CD4-positive, alpha-beta T cell (primary cell): ENCODE measurements at regions of chr15 and their contacts with region 1.

Region 1: GRCh38 chr15:90233376-90234095 is at the start of gene CIB1:
- DNase-seq: peak; percentile 17 to 98 (median 96)
- ATAC-seq: peak; percentile 69
- H3K4me3 ChIP-seq: peak within 1 kb of the TSS; percentile 89
- H3K4me3 Mint-ChIP-seq: peak within 1 kb of the TSS; percentile 93
- H3K27ac ChIP-seq: peak within 1 kb of the TSS; percentile 97 to 99
- H3K27ac Mint-ChIP-seq: peak within 1 kb of the TSS; percentile 99
- H3K4me1 ChIP-seq: peaks cover 60% of the 10 kb centered on the region
- H3K4me1 Mint-ChIP-seq: peaks cover 56% of the 10 kb centered on the region
- H3K27me3 ChIP-seq: no peaks in the 10 kb centered on the region
- H3K27me3 Mint-ChIP-seq: no peaks in the 10 kb centered on the region
- CTCF ChIP-seq: peak; percentile 34
- total RNA-seq, gene CIB1: 279 to 295 TPM

Region 2: GRCh38 chr15:89893696-89894455 is 339.7 kb before region 1 on chr15 and contains the start of gene AP3S2:
- CTCF ChIA-PET with region 1: no interaction called
- POLR2A ChIA-PET with region 1: interaction called, 6 read pairs
- intact Hi-C with region 1: loop called in 1 of 2 experiments (anchors 10 kb)
- DNase-seq: peak; percentile 81 to 94 (median 85)
- ATAC-seq: peak; percentile 90
- H3K4me3 ChIP-seq: peak within 1 kb of the TSS; percentile 86
- H3K4me3 Mint-ChIP-seq: peak within 1 kb of the TSS; percentile 96
- H3K27ac ChIP-seq: peak within 1 kb of the TSS; percentile 60 to 74
- H3K27ac Mint-ChIP-seq: peak within 1 kb of the TSS; percentile 95
- H3K4me1 ChIP-seq: peaks cover 29% of the 10 kb centered on the region
- H3K4me1 Mint-ChIP-seq: peaks cover 42% of the 10 kb centered on the region
- H3K27me3 ChIP-seq: no peaks in the 10 kb centered on the region
- H3K27me3 Mint-ChIP-seq: no peaks in the 10 kb centered on the region
- CTCF ChIP-seq: no peak
- total RNA-seq, gene AP3S2: 18.9 to 20.5 TPM

Region 3: GRCh38 chr15:90013503-90013937 is 220.0 kb before region 1 on chr15:
- CTCF ChIA-PET with region 1: no interaction called
- POLR2A ChIA-PET with region 1: no interaction called
- intact Hi-C with region 1: no loop called
- DNase-seq: peak in 3 of 14 experiments; percentile 73 to 87 (median 79)
- ATAC-seq: peak; percentile 88
- H3K4me3 ChIP-seq: peak overlapping the region; percentile 10
- H3K4me3 Mint-ChIP-seq: peak overlapping the region; percentile 68
- H3K27ac ChIP-seq: peak overlapping the region in 1 of 2 donors; percentile 14
- H3K27ac Mint-ChIP-seq: peak overlapping the region; percentile 61
- H3K4me1 ChIP-seq: peaks cover 55% of the 10 kb centered on the region
- H3K4me1 Mint-ChIP-seq: peaks cover 69% of the 10 kb centered on the region
- H3K27me3 ChIP-seq: no peaks in the 10 kb centered on the region
- H3K27me3 Mint-ChIP-seq: no peaks in the 10 kb centered on the region
- CTCF ChIP-seq: no peak

Region 4: GRCh38 chr15:90143166-90143655 is 90.3 kb before region 1 on chr15:
- CTCF ChIA-PET with region 1: interaction called, 4 read pairs
- POLR2A ChIA-PET with region 1: interaction called, 5 read pairs
- intact Hi-C with region 1: loop called in 1 of 2 experiments (anchors 5 kb)
- DNase-seq: peak; percentile 35 to 78 (median 60)
- ATAC-seq: peak; percentile 67
- H3K4me3 ChIP-seq: peak overlapping the region; percentile 5
- H3K4me3 Mint-ChIP-seq: peak overlapping the region; percentile 66
- H3K27ac ChIP-seq: no peak overlapping the region
- H3K27ac Mint-ChIP-seq: peak overlapping the region; percentile 78
- H3K4me1 ChIP-seq: peaks cover 28% of the 10 kb centered on the region
- H3K4me1 Mint-ChIP-seq: peaks cover 37% of the 10 kb centered on the region
- H3K27me3 ChIP-seq: no peaks in the 10 kb centered on the region
- H3K27me3 Mint-ChIP-seq: no peaks in the 10 kb centered on the region
- CTCF ChIP-seq: peak; percentile 78

Region 5: GRCh38 chr15:90201130-90201949 is 32.2 kb before region 1 on chr15 and contains the start of gene SEMA4B:
- CTCF ChIA-PET with region 1: no interaction called
- POLR2A ChIA-PET with region 1: interaction called, 97 read pairs
- intact Hi-C with region 1: loop called in 1 of 2 experiments (anchors 1 kb)
- DNase-seq: peak; percentile 44 to 88 (median 70)
- ATAC-seq: peak; percentile 94
- H3K4me3 ChIP-seq: peak within 1 kb of the TSS; percentile 78
- H3K4me3 Mint-ChIP-seq: peak within 1 kb of the TSS; percentile 88
- H3K27ac ChIP-seq: peak within 1 kb of the TSS; percentile 5 to 36
- H3K27ac Mint-ChIP-seq: peak within 1 kb of the TSS; percentile 74
- H3K4me1 ChIP-seq: peaks cover 28% of the 10 kb centered on the region
- H3K4me1 Mint-ChIP-seq: peaks cover 28% of the 10 kb centered on the region
- H3K27me3 ChIP-seq: no peaks in the 10 kb centered on the region
- H3K27me3 Mint-ChIP-seq: no peaks in the 10 kb centered on the region
- CTCF ChIP-seq: no peak
- total RNA-seq, gene SEMA4B: 8.0 to 9.5 TPM

Region 6: GRCh38 chr15:90249203-90249863 is 15.8 kb after region 1 on chr15 and contains the start of gene TTLL13:
- CTCF ChIA-PET with region 1: interaction called, 3 read pairs
- POLR2A ChIA-PET with region 1: interaction called, 20 read pairs
- intact Hi-C with region 1: no loop called
- DNase-seq: peak; percentile 33 to 87 (median 60)
- ATAC-seq: peak; percentile 70
- H3K4me3 ChIP-seq: peak within 1 kb of the TSS; percentile 61
- H3K4me3 Mint-ChIP-seq: peak within 1 kb of the TSS; percentile 76
- H3K27ac ChIP-seq: no peak within 1 kb of the TSS
- H3K27ac Mint-ChIP-seq: peak within 1 kb of the TSS; percentile 63
- H3K4me1 ChIP-seq: peaks cover 19% of the 10 kb centered on the region
- H3K4me1 Mint-ChIP-seq: peaks cover 17% of the 10 kb centered on the region
- H3K27me3 ChIP-seq: no peaks in the 10 kb centered on the region
- H3K27me3 Mint-ChIP-seq: no peaks in the 10 kb centered on the region
- CTCF ChIP-seq: no peak
- total RNA-seq, gene TTLL13: 0.63 to 1.8 TPM

Region 7: GRCh38 chr15:90352109-90352893 is 118.8 kb after region 1 on chr15 and contains the start of gene ZNF774:
- CTCF ChIA-PET with region 1: no interaction called
- POLR2A ChIA-PET with region 1: no interaction called
- intact Hi-C with region 1: loop called in 1 of 2 experiments (anchors 1 kb)
- DNase-seq: peak; percentile 78 to 97 (median 84)
- ATAC-seq: peak; percentile 98
- H3K4me3 ChIP-seq: peak within 1 kb of the TSS; percentile 68
- H3K4me3 Mint-ChIP-seq: peak within 1 kb of the TSS; percentile 90
- H3K27ac ChIP-seq: no peak within 1 kb of the TSS
- H3K27ac Mint-ChIP-seq: peak within 1 kb of the TSS; percentile 56
- H3K4me1 ChIP-seq: peaks cover 20% of the 10 kb centered on the region
- H3K4me1 Mint-ChIP-seq: peaks cover 9% of the 10 kb centered on the region
- H3K27me3 ChIP-seq: no peaks in the 10 kb centered on the region
- H3K27me3 Mint-ChIP-seq: no peaks in the 10 kb centered on the region
- CTCF ChIP-seq: no peak
- total RNA-seq, gene ZNF774: 0.20 to 1.1 TPM